ENCODE measurements at regions of chr1 and their contacts with region 1.

Region 1: GRCh38 chr1:39609618-39610331 is 29.7 kb downstream of the HEYL start:
- DNase-seq: peak; percentile 30 to 66
- H3K4me3 ChIP-seq: no peak overlapping the region
- H3K27ac ChIP-seq: no peak overlapping the region
- H3K4me1 ChIP-seq: peaks cover 0 to 7% of the 10 kb centered on the region in 2 donors
- H3K27me3 ChIP-seq: no peaks in the 10 kb centered on the region
- CTCF ChIP-seq: peak in 3 of 6 experiments; percentile 55 to 76 (median 62)
- POLR2A ChIP-seq: no peak

Region 2: DNA sequence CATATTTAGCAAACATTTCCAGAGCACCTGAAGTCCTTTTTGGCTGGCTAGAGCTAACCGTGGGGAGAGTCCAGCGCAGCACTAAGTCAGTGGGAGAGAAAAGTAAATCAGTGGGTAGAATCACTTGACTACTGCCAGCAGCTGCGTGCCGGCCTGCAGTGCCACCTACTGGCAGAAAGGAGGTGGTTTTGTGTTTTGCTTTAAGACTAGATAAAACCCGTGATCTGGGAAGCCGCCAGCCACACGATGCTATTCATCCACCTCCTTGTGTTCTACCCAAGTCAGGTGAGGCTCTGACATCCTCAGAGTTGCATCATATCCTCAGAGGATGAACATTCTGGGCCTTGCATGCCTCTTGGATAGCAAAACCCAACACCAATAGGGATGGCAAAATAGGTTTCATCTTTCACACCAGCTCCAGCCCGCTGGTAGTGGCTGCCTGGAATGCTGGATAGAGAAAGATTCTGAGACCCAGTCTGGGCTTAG is 43.8 kb after region 1 on chr1:
- intact Hi-C with region 1: loop called (anchors 2 kb)
- DNase-seq: peak; percentile 76 to 81
- H3K4me3 ChIP-seq: no peak overlapping the region
- H3K27ac ChIP-seq: no peak overlapping the region
- H3K4me1 ChIP-seq: no peaks in the 10 kb centered on the region
- H3K27me3 ChIP-seq: no peaks in the 10 kb centered on the region
- CTCF ChIP-seq: peak; percentile 72 to 92 (median 82)
- POLR2A ChIP-seq: no peak

Region 3: DNA sequence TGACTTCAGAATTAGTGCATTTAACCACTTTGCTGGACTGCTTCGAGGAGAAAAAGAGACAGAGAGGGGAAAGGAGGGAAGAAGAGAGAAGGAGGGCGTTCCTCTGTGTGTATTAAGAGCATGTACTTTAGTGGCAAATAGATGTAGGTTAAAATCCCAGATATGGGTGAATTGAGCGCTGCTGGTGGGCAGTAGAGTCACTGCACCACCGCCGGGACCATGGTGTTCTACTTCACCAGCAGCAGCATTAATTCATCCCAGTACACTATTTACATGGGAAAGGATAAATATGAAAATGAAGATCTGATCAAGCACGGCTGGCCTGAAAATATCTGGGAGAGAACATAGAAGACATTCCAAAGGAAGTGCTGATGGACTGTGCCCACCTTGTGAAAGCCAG is 108.0 kb after region 1 on chr1:
- intact Hi-C with region 1: loop called (anchors 5 kb)
- DNase-seq: no peak
- H3K4me3 ChIP-seq: no peak overlapping the region
- H3K27ac ChIP-seq: no peak overlapping the region
- H3K4me1 ChIP-seq: no peaks in the 10 kb centered on the region
- H3K27me3 ChIP-seq: no peaks in the 10 kb centered on the region
- CTCF ChIP-seq: no peak
- POLR2A ChIP-seq: no peak

Measured in thyroid gland (tissue), 4 donors.